ENCODE measurements at regions of chr12 and their contacts with region 1.

Region 1: GRCh38 chr12:113247123-113248055 is 26.1 kb downstream of the TPCN1 start:
- DNase-seq: no peak
- ATAC-seq: no peak
- H3K4me3 Mint-ChIP-seq: no peak overlapping the region
- H3K27ac Mint-ChIP-seq: peak overlapping the region; percentile 98
- H3K4me1 Mint-ChIP-seq: peaks cover 49% of the 10 kb centered on the region
- H3K27me3 Mint-ChIP-seq: no peaks in the 10 kb centered on the region
- CTCF ChIP-seq: no peak

Region 2: DNA sequence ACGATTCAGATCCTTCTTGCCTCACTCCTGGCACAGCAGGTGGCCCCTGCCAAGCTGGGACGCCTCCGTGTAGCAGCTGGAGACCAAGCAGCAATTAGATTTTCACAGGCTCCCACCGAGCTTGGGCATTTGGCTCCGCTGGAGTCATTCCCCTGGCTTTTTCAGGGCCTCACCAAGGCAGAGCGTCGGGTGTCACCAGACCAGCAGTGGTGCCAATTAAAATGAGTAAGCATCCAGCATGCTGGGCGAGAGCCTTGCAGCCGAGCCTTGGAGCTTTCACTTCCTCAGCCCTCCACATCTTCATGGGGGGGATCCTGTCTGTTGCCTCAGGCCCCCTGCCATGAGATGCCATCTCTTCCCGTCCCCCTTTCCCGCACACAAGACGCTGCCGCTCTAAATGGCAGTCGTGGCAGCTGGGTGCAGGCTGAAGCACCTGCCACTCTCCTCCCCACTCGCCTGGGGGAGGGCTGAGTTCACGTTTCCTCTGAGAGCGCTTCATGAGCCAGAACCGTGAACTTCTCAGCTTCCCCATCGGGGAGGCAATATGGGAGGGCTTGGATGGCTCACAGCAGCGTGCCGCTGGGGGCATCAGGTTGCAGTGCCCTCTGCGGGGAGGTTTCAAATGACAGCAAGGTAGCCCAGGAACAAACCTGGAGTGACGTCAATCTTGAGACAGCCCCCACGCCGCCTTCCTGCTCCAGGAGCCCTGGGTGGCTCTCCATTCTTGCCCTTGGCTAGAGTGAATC is 14.4 kb before region 1 on chr12:
- CTCF ChIA-PET with region 1: interaction called, 12 read pairs
- POLR2A ChIA-PET with region 1: interaction called, 4 read pairs
- DNase-seq: peak; percentile 82
- ATAC-seq: peak; percentile 93
- H3K4me3 Mint-ChIP-seq: peak overlapping the region; percentile 57
- H3K27ac Mint-ChIP-seq: peak overlapping the region; percentile 96
- H3K4me1 Mint-ChIP-seq: peaks cover 34% of the 10 kb centered on the region
- H3K27me3 Mint-ChIP-seq: no peaks in the 10 kb centered on the region
- CTCF ChIP-seq: no peak

Measured in WTC11 (cell line).